CD4-positive, alpha-beta T cell (primary cell): ENCODE measurements at regions of chr7 and their contacts with region 1.

Region 1: DNA sequence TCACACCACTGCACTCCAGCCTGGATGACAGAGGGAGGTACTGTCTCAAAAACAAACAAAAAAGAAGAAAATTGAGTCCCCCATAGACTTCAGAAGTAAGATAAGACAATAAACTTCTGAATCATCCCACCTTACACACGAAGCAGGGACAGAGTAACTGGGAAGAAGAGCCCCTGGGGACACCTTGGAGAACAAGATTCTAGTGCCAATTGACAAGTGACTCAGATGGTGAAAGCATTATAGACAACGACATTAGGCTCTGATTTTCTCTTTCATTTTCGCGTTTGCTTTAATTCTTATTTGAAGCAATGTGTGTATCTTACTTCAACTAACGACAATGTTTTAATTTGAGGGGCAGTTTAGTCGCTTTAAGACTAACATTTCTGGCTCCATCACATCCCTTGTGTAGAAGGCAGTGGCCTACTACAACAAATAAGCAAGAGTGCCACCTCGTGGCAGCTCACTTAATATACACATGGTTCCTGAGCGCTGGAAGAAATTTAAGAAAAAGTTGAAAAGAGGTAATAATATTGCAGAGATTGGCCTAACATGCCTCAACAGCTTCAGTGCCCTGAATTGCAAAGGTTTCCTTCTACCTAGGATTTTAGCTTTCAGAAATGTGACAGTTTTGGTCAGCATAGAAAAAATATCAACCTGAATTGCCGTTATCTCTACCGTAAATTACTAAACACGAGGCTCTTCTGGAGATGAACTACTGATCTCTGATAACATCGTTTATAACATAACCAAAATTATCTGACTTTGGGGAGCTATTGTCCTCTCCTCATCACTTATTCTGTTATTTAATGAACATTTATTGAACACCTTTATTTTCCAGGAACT is 36.7 kb downstream of the ASNS start:
- DNase-seq: peak; percentile 24 to 74 (median 48)
- ATAC-seq: peak; percentile 32
- H3K4me3 ChIP-seq: no peak overlapping the region
- H3K4me3 Mint-ChIP-seq: no peak overlapping the region
- H3K27ac ChIP-seq: no peak overlapping the region
- H3K27ac Mint-ChIP-seq: no peak overlapping the region
- H3K4me1 ChIP-seq: no peaks in the 10 kb centered on the region
- H3K4me1 Mint-ChIP-seq: no peaks in the 10 kb centered on the region
- H3K27me3 ChIP-seq: peaks cover 0 to 13% of the 10 kb centered on the region in 2 experiments
- H3K27me3 Mint-ChIP-seq: peaks cover 61% of the 10 kb centered on the region
- CTCF ChIP-seq: peak; percentile 78

Region 2: DNA sequence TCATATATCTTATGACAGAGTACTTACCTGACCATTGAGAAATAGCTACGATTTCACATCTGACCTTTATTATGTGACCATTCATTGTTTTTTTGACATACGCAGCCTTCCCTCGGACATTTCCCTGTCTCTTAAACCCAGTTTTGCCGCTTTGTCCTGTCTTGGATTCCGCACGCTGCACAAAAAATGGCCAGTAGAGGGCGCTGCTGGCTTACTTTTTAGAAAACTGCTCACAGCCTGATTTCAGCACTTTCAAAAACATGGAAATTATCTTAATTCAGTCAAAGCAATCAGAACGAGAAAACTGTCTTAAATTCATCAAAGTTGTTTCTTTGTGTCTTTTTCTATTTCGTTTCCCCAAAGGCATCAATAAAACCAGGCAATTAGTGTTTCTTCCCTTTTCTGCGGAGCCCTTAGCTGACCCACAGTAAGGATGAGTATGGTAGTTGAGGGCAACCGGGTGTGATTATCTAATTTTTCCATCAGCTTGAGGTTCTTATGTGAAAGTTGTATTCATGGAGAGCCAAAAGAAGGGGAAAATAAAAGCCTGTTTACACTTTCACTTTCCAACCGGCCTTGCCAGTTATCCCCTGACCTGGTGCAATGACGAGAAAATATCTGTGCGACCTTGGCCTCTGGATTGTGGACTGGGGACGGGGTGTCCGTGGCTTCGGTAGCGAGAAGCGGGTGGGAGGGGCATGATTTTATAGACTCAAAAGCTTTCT is 1918.8 kb before region 1 on chr7:
- CTCF ChIA-PET with region 1: no interaction called
- POLR2A ChIA-PET with region 1: no interaction called
- intact Hi-C with region 1: loop called in 1 of 2 experiments (anchors 1 kb)
- DNase-seq: peak; percentile 50 to 79 (median 66)
- ATAC-seq: no peak
- H3K4me3 ChIP-seq: no peak overlapping the region
- H3K4me3 Mint-ChIP-seq: no peak overlapping the region
- H3K27ac ChIP-seq: no peak overlapping the region
- H3K27ac Mint-ChIP-seq: no peak overlapping the region
- H3K4me1 ChIP-seq: no peaks in the 10 kb centered on the region
- H3K4me1 Mint-ChIP-seq: no peaks in the 10 kb centered on the region
- H3K27me3 ChIP-seq: peaks cover 0 to 9% of the 10 kb centered on the region in 2 experiments
- H3K27me3 Mint-ChIP-seq: peaks cover 58% of the 10 kb centered on the region
- CTCF ChIP-seq: peak; percentile 92

Region 3: DNA sequence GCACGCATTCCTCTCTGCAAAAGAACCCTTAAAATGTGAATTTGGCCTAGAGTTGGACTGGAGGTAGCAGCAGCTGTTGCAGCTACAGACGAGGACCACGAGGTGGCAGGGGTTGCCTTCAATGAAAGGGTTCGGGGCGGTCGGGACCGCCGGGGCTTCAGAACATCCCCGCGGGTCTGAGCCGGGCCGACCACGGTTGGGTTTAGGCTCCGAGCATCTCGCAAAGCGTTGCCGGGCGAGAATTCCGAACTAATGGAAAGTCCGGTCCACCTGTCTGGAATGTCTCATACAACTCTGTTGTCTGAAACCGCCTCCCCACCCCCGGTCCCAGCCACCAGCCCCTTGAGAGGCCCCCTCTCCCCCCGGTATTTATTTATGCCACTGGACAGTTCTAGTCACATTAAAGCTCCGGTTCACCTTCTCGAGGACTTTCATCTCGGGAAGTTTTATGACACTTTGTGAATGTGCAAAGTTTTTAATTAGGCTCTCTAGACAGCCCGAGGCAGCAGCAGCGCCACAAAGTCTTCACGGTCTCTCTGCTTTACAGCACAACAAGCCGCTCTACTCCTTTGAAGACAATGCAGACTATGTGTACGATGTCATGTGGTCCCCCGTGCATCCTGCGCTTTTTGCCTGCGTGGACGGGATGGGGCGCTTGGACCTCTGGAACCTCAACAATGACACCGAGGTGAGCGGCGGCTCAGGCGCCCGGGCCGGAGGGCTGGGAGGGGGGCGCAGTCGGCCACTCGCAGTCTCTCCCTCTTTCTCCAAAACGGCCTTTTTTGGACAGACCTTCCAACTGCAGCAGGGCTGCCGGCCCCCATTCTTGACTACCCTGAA is 1759.8 kb before region 1 on chr7:
- CTCF ChIA-PET with region 1: no interaction called
- POLR2A ChIA-PET with region 1: no interaction called
- intact Hi-C with region 1: loop called in 1 of 2 experiments (anchors 2 kb)
- DNase-seq: peak; percentile 20 to 66 (median 28)
- ATAC-seq: peak; percentile 80
- H3K4me3 ChIP-seq: peak overlapping the region; percentile 41
- H3K4me3 Mint-ChIP-seq: peak overlapping the region; percentile 90
- H3K27ac ChIP-seq: no peak overlapping the region
- H3K27ac Mint-ChIP-seq: no peak overlapping the region
- H3K4me1 ChIP-seq: peaks cover 11% of the 10 kb centered on the region
- H3K4me1 Mint-ChIP-seq: peaks cover 8% of the 10 kb centered on the region
- H3K27me3 ChIP-seq: peaks cover 11 to 46% of the 10 kb centered on the region in 2 experiments
- H3K27me3 Mint-ChIP-seq: peaks cover 58% of the 10 kb centered on the region
- CTCF ChIP-seq: peak; percentile 72

Region 4: DNA sequence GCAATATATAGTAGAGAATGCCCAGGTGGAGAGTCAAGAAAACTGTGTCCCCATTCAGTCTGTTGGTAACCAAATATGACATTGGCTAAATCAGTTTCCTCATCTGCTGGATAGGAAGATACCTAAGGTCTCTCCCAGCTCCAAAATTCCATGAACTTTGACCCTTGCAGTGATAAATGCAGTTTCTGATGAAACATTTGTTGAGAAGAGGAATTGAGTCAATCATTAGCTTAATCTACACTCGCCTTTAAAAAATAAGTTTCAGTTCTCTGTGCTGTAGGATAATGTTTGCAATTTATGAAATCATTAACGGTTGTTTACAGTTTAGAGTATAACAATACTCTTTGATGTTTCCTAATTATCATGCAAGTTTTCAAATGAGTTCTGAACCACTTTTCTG is 1475.6 kb before region 1 on chr7:
- CTCF ChIA-PET with region 1: no interaction called
- POLR2A ChIA-PET with region 1: no interaction called
- intact Hi-C with region 1: no loop called
- DNase-seq: no peak
- ATAC-seq: no peak
- H3K4me3 ChIP-seq: no peak overlapping the region
- H3K4me3 Mint-ChIP-seq: no peak overlapping the region
- H3K27ac ChIP-seq: no peak overlapping the region
- H3K27ac Mint-ChIP-seq: no peak overlapping the region
- H3K4me1 ChIP-seq: no peaks in the 10 kb centered on the region
- H3K4me1 Mint-ChIP-seq: no peaks in the 10 kb centered on the region
- H3K27me3 ChIP-seq: no peaks in the 10 kb centered on the region
- H3K27me3 Mint-ChIP-seq: peaks cover 10% of the 10 kb centered on the region
- CTCF ChIP-seq: no peak

Region 5: DNA sequence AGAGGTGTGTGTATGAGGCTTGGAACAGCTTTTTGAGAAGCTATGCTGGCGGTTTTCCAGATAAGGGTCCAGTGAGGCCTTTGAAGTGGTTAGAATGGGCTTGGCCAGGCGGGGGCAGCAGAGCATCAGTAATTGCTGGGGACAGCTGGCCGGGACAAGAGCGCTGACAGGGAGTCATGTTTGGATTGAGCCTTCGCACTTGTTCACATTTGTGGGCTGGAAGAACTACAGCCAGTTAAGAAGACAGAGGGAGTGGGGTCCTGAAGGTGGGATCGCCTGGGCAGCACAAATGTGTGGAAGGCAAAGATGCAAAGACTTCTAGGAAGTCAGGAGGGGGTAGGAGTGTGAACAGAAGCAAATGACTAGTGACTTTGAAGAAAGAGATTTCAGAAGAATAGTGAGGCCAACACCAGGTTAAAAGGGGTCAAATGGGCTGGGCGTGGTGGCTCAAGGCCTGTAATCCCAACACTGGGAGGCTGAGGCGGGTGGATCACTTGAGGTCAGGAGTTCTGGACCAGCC is 730.7 kb before region 1 on chr7:
- CTCF ChIA-PET with region 1: no interaction called
- POLR2A ChIA-PET with region 1: no interaction called
- intact Hi-C with region 1: loop called (anchors 2 kb)
- DNase-seq: peak; percentile 46 to 77 (median 53)
- ATAC-seq: peak; percentile 21
- H3K4me3 ChIP-seq: no peak overlapping the region
- H3K4me3 Mint-ChIP-seq: no peak overlapping the region
- H3K27ac ChIP-seq: no peak overlapping the region
- H3K27ac Mint-ChIP-seq: no peak overlapping the region
- H3K4me1 ChIP-seq: no peaks in the 10 kb centered on the region
- H3K4me1 Mint-ChIP-seq: no peaks in the 10 kb centered on the region
- H3K27me3 ChIP-seq: peaks cover 0 to 6% of the 10 kb centered on the region in 2 experiments
- H3K27me3 Mint-ChIP-seq: peaks cover 37% of the 10 kb centered on the region
- CTCF ChIP-seq: peak; percentile 64

Region 6: GRCh38 chr7:97145068-97145467 is 690.4 kb before region 1 on chr7:
- CTCF ChIA-PET with region 1: no interaction called
- POLR2A ChIA-PET with region 1: no interaction called
- intact Hi-C with region 1: loop called in 1 of 2 experiments (anchors 5 kb)
- DNase-seq: peak in 3 of 14 experiments; percentile 18 to 38 (median 36)
- ATAC-seq: no peak
- H3K4me3 ChIP-seq: no peak overlapping the region
- H3K4me3 Mint-ChIP-seq: no peak overlapping the region
- H3K27ac ChIP-seq: no peak overlapping the region
- H3K27ac Mint-ChIP-seq: no peak overlapping the region
- H3K4me1 ChIP-seq: no peaks in the 10 kb centered on the region
- H3K4me1 Mint-ChIP-seq: peaks cover 5% of the 10 kb centered on the region
- H3K27me3 ChIP-seq: no peaks in the 10 kb centered on the region
- H3K27me3 Mint-ChIP-seq: no peaks in the 10 kb centered on the region
- CTCF ChIP-seq: peak; percentile 33